ENCODE measurements at regions of chr12 and their contacts with region 1.

Region 1: GRCh38 chr12:11015775-11016430 is 6.5 kb downstream of the TAS2R19 start:
- DNase-seq: no peak
- ATAC-seq: no peak
- H3K4me3 ChIP-seq: no peak overlapping the region
- H3K4me3 Mint-ChIP-seq: no peak overlapping the region
- H3K27ac ChIP-seq: no peak overlapping the region
- H3K27ac Mint-ChIP-seq: no peak overlapping the region
- H3K4me1 ChIP-seq: no peaks in the 10 kb centered on the region
- H3K4me1 Mint-ChIP-seq: no peaks in the 10 kb centered on the region
- H3K27me3 ChIP-seq: no peaks in the 10 kb centered on the region
- H3K27me3 Mint-ChIP-seq: no peaks in the 10 kb centered on the region
- CTCF ChIP-seq: no peak

Region 2: DNA sequence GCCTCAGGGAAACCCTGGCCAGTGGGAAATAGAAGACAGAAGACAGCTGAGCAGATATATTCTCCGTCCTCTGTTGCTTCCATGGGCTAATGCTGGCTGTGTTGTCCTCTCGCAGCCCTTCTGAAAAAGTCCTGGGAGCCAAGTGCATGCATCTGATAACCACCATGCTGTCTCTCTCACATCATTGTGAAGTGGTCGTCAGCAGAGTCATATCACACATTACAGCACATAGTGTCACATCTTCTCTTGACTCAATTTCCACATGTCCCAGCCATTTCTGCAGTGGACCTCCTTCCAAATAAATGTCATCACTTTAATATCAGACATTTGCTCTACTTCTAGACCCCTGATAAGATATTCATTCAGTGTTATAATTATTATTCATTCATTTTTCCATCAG is 21.6 kb before region 1 on chr12:
- CTCF ChIA-PET with region 1: no interaction called
- POLR2A ChIA-PET with region 1: no interaction called
- intact Hi-C with region 1: no loop called
- DNase-seq: no peak
- ATAC-seq: no peak
- H3K4me3 ChIP-seq: no peak overlapping the region
- H3K4me3 Mint-ChIP-seq: no peak overlapping the region
- H3K27ac ChIP-seq: no peak overlapping the region
- H3K27ac Mint-ChIP-seq: no peak overlapping the region
- H3K4me1 ChIP-seq: no peaks in the 10 kb centered on the region
- H3K4me1 Mint-ChIP-seq: no peaks in the 10 kb centered on the region
- H3K27me3 ChIP-seq: no peaks in the 10 kb centered on the region
- H3K27me3 Mint-ChIP-seq: peaks cover 3% of the 10 kb centered on the region
- CTCF ChIP-seq: no peak

Region 3: GRCh38 chr12:11026121-11026520 is 10.2 kb after region 1 on chr12:
- CTCF ChIA-PET with region 1: no interaction called
- POLR2A ChIA-PET with region 1: no interaction called
- intact Hi-C with region 1: loop called in 1 of 2 experiments (anchors 1 kb)
- DNase-seq: no peak
- ATAC-seq: no peak
- H3K4me3 ChIP-seq: no peak overlapping the region
- H3K4me3 Mint-ChIP-seq: no peak overlapping the region
- H3K27ac ChIP-seq: no peak overlapping the region
- H3K27ac Mint-ChIP-seq: no peak overlapping the region
- H3K4me1 ChIP-seq: no peaks in the 10 kb centered on the region
- H3K4me1 Mint-ChIP-seq: peaks cover 6% of the 10 kb centered on the region
- H3K27me3 ChIP-seq: no peaks in the 10 kb centered on the region
- H3K27me3 Mint-ChIP-seq: no peaks in the 10 kb centered on the region
- CTCF ChIP-seq: no peak

Region 4: DNA sequence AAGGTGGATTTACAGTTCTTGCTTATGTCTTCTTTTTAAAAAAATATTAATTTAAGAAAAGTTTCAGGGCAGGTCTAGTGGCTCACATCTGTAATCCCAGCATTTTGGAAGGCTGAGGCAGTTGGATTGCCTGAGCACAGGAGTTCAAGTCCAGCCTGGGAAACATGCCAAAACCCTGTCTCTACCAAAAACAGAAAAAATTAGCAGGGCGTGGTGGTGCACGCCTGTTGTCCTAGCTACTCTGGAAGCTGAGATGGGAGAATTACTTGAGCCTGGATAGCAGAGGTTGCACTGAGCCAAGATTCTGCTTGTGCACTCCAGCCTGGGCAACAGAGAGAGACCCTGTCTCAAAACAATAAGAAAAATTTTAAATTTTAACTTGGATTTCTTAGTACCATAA is 51.6 kb after region 1 on chr12:
- CTCF ChIA-PET with region 1: no interaction called
- POLR2A ChIA-PET with region 1: no interaction called
- intact Hi-C with region 1: loop called (anchors 1 to 2 kb)
- DNase-seq: no peak
- ATAC-seq: no peak
- H3K4me3 ChIP-seq: no peak overlapping the region
- H3K4me3 Mint-ChIP-seq: no peak overlapping the region
- H3K27ac ChIP-seq: no peak overlapping the region
- H3K27ac Mint-ChIP-seq: no peak overlapping the region
- H3K4me1 ChIP-seq: no peaks in the 10 kb centered on the region
- H3K4me1 Mint-ChIP-seq: peaks cover 14% of the 10 kb centered on the region
- H3K27me3 ChIP-seq: no peaks in the 10 kb centered on the region
- H3K27me3 Mint-ChIP-seq: no peaks in the 10 kb centered on the region
- CTCF ChIP-seq: no peak

Region 5: GRCh38 chr12:11075642-11076041 is 59.7 kb after region 1 on chr12:
- CTCF ChIA-PET with region 1: no interaction called
- POLR2A ChIA-PET with region 1: no interaction called
- intact Hi-C with region 1: loop called (anchors 1 to 2 kb)
- DNase-seq: no peak
- ATAC-seq: no peak
- H3K4me3 ChIP-seq: no peak overlapping the region
- H3K4me3 Mint-ChIP-seq: no peak overlapping the region
- H3K27ac ChIP-seq: no peak overlapping the region
- H3K27ac Mint-ChIP-seq: no peak overlapping the region
- H3K4me1 ChIP-seq: no peaks in the 10 kb centered on the region
- H3K4me1 Mint-ChIP-seq: no peaks in the 10 kb centered on the region
- H3K27me3 ChIP-seq: no peaks in the 10 kb centered on the region
- H3K27me3 Mint-ChIP-seq: no peaks in the 10 kb centered on the region
- CTCF ChIP-seq: no peak

Region 6: GRCh38 chr12:11524446-11524845 is 508.5 kb after region 1 on chr12:
- CTCF ChIA-PET with region 1: no interaction called
- POLR2A ChIA-PET with region 1: no interaction called
- intact Hi-C with region 1: no loop called
- DNase-seq: no peak
- ATAC-seq: no peak
- H3K4me3 ChIP-seq: no peak overlapping the region
- H3K4me3 Mint-ChIP-seq: no peak overlapping the region
- H3K27ac ChIP-seq: no peak overlapping the region
- H3K27ac Mint-ChIP-seq: no peak overlapping the region
- H3K4me1 ChIP-seq: no peaks in the 10 kb centered on the region
- H3K4me1 Mint-ChIP-seq: no peaks in the 10 kb centered on the region
- H3K27me3 ChIP-seq: no peaks in the 10 kb centered on the region
- H3K27me3 Mint-ChIP-seq: peaks cover 2% of the 10 kb centered on the region
- CTCF ChIP-seq: no peak

Measured in CD8-positive, alpha-beta T cell (primary cell).